ENCODE measurements at regions of chr19 and their contacts with region 1.

Region 1: GRCh38 chr19:49983645-49984229 is 22.8 kb upstream of the SIGLEC11 start:
- DNase-seq: peak; percentile 20
- H3K4me3 ChIP-seq: no peak overlapping the region
- H3K27ac ChIP-seq: no peak overlapping the region
- H3K4me1 ChIP-seq: no peaks in the 10 kb centered on the region
- H3K27me3 ChIP-seq: no peaks in the 10 kb centered on the region
- CTCF ChIP-seq: peak; percentile 80 to 81

Region 2: DNA sequence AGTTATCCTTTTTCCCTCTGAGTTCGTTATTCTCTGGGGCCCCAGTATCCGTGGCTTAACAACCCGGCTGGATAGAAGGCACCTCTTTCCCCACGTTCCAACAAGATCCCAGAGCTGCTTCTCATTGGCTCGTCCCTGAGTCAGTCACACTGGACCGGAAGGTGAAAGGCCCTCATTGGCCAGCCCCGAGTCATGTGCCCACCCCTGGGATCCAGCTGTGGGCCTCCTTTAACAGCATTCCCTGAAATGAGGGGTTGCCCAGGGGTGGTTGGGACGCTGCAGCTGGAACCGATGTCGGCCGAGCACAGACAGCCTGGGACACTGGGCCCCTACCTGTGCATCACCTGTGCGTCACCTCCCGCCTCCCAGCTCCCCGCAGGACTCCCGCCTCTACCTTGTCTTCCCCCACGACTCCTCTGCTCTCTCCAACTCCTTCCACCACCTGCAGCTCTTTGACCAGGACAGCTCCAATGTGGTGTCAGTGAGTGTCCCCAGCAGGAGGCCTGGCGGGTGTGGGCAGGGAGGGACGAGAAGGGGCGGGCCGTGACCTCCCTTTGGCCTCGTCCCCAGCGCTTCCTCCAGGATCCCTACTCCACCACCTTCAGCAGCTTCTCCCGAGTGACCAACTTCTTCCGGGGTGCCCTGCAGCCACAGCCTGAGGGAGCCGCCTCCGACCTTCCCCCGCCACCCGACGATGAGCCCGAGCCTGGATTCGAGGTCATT is 101.9 kb before region 1 on chr19:
- CTCF ChIA-PET with region 1: no interaction called
- dilution Hi-C with region 1: no loop called
- in situ Hi-C with region 1: no loop called
- intact Hi-C with region 1: no loop called
- DNase-seq: no peak
- H3K4me3 ChIP-seq: no peak overlapping the region
- H3K27ac ChIP-seq: no peak overlapping the region
- H3K4me1 ChIP-seq: peaks cover 12% of the 10 kb centered on the region
- H3K27me3 ChIP-seq: no peaks in the 10 kb centered on the region
- CTCF ChIP-seq: no peak

Region 3: GRCh38 chr19:49920624-49921363 is 62.9 kb before region 1 on chr19:
- CTCF ChIA-PET with region 1: no interaction called
- dilution Hi-C with region 1: no loop called
- in situ Hi-C with region 1: no loop called
- intact Hi-C with region 1: no loop called
- DNase-seq: no peak
- H3K4me3 ChIP-seq: no peak overlapping the region
- H3K27ac ChIP-seq: no peak overlapping the region
- H3K4me1 ChIP-seq: peaks cover 12% of the 10 kb centered on the region
- H3K27me3 ChIP-seq: no peaks in the 10 kb centered on the region
- CTCF ChIP-seq: no peak

Region 4: GRCh38 chr19:49937750-49938381 is 45.9 kb before region 1 on chr19:
- CTCF ChIA-PET with region 1: no interaction called
- dilution Hi-C with region 1: no loop called
- in situ Hi-C with region 1: no loop called
- intact Hi-C with region 1: loop called (anchors 1 kb)
- DNase-seq: peak; percentile 39
- H3K4me3 ChIP-seq: peak overlapping the region; percentile 21 to 28 (median 26)
- H3K27ac ChIP-seq: no peak overlapping the region
- H3K4me1 ChIP-seq: no peaks in the 10 kb centered on the region
- H3K27me3 ChIP-seq: no peaks in the 10 kb centered on the region
- CTCF ChIP-seq: peak; percentile 86 to 99

Region 5: DNA sequence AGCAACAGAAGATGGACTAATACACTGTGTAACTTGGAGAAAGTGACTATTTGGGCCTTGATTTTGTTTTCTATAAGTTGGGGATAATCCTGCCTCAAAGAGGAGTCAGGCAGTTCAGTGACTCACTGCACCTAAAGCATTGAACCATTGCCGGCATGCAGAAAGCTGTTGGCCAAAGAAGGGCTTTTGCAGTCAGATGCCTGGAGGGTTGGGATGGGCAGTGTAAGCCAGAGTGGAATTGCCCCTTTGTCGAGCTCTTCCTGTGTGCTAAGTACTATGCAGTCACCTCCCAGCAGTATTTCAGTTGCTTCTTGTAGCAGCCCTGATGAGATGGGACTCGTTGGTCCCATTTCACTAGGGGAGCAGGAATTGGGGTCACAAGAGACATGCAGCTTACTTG is 53.2 kb after region 1 on chr19:
- CTCF ChIA-PET with region 1: no interaction called
- dilution Hi-C with region 1: no loop called
- in situ Hi-C with region 1: no loop called
- intact Hi-C with region 1: no loop called
- DNase-seq: peak; percentile 63
- H3K4me3 ChIP-seq: no peak overlapping the region
- H3K27ac ChIP-seq: no peak overlapping the region
- H3K4me1 ChIP-seq: peaks cover 5% of the 10 kb centered on the region
- H3K27me3 ChIP-seq: no peaks in the 10 kb centered on the region
- CTCF ChIP-seq: no peak

Measured in mammary epithelial cell (primary cell).